Activated CD8-positive, alpha-beta T cell treated with anti-CD3 and anti-CD28 coated beads, Interleukin-2, amount 10 ng/mL, durations not matched to agents 7 days and 5 days (primary cell): ENCODE measurements at regions of chr14 and their contacts with region 1.

Region 1: GRCh38 chr14:23120541-23121251 is 1.6 kb upstream of the CEBPE start:
- DNase-seq: peak; percentile 90
- ATAC-seq: peak; percentile 82
- H3K4me3 Mint-ChIP-seq: peak overlapping the region; percentile 48
- H3K27ac Mint-ChIP-seq: peak overlapping the region; percentile 88
- H3K4me1 Mint-ChIP-seq: peaks cover 41% of the 10 kb centered on the region
- H3K27me3 Mint-ChIP-seq: no peaks in the 10 kb centered on the region

Region 2: GRCh38 chr14:22973217-22974032 is 147.3 kb before region 1 on chr14:
- CTCF ChIA-PET with region 1: no interaction called
- POLR2A ChIA-PET with region 1: no interaction called
- DNase-seq: peak; percentile 55
- ATAC-seq: no peak
- H3K4me3 Mint-ChIP-seq: no peak overlapping the region
- H3K27ac Mint-ChIP-seq: no peak overlapping the region
- H3K4me1 Mint-ChIP-seq: no peaks in the 10 kb centered on the region
- H3K27me3 Mint-ChIP-seq: peaks cover 7% of the 10 kb centered on the region

Region 3: DNA sequence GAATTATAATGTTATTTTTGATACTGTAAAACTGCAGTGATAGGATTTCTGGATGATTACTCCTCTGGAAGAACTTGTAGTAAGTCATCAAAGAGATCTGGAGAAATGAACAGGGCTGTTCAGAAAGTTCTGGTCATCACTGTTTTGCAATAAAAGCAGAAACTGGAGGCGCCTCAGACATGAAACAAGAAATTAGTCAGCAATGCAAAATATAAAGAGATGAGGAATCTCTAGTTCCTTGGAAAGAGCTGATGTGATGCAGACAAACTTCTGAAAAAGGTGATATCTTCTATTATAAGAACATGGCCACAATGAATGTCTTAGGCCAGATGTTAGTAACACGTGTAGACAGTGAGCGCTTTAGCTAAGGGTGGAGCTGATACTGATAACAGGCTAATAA is 35.2 kb before region 1 on chr14:
- CTCF ChIA-PET with region 1: interaction called, 12 read pairs
- POLR2A ChIA-PET with region 1: no interaction called
- DNase-seq: no peak
- ATAC-seq: no peak
- H3K4me3 Mint-ChIP-seq: no peak overlapping the region
- H3K27ac Mint-ChIP-seq: no peak overlapping the region
- H3K4me1 Mint-ChIP-seq: no peaks in the 10 kb centered on the region
- H3K27me3 Mint-ChIP-seq: no peaks in the 10 kb centered on the region

Region 4: DNA sequence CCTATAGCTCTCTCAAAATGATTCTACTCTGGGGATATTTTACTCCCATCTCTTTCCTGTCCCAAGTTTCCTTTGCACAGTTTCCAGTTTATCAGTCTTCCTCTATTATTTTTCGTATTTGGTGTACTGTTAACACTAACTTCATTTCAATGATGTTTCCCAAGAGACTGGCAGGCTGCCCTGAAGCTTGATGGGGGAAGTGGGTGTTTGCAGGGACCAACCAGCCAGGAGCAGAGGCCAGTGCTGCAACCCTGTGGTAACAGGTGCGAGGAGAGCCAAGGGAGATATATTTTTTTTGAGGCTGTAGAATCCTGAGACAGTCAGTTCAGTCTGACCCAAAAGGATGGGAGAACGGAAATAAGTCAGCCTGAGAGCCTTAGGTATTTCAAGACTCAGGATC is 10.2 kb after region 1 on chr14:
- CTCF ChIA-PET with region 1: interaction called, 41 read pairs
- POLR2A ChIA-PET with region 1: no interaction called
- DNase-seq: no peak
- ATAC-seq: no peak
- H3K4me3 Mint-ChIP-seq: no peak overlapping the region
- H3K27ac Mint-ChIP-seq: no peak overlapping the region
- H3K4me1 Mint-ChIP-seq: peaks cover 7% of the 10 kb centered on the region
- H3K27me3 Mint-ChIP-seq: no peaks in the 10 kb centered on the region

Region 5: DNA sequence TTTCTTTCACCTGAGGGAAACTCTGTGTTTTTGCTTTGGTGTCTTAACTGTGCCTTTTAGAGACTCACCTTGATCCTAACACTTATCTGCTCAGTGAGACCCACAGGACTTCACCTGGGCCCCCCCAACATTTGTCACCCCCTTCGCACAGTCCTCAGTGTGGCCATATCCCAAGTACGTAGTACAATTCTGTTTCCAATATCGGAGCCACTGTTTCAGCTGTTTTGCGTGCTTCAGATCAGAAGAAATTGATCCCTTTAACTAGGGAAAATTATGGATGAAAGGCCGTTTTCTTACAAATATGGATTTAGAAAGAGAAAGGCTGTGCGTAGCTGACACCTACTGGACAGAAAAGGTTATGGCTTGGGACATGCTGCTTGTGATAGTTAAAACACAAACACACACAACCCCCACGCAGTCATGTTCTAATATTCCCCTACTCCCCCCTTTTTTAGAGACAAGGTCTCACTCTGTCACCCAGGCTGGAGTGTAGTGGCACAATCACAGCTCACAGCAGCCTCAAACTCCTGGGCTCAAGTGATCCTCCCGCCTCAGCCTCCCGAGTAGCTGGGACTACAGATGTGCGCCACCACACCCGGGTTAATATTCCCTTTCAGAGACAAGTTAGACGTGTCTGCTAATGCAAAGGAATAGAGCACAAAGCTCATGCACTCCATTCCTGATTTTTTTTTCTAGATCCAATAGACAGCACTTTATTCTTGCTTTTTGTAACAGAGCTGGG is 66.4 kb after region 1 on chr14:
- CTCF ChIA-PET with region 1: interaction called, 378 read pairs
- POLR2A ChIA-PET with region 1: interaction called, 6 read pairs
- DNase-seq: peak; percentile 47
- ATAC-seq: no peak
- H3K4me3 Mint-ChIP-seq: no peak overlapping the region
- H3K27ac Mint-ChIP-seq: no peak overlapping the region
- H3K4me1 Mint-ChIP-seq: no peaks in the 10 kb centered on the region
- H3K27me3 Mint-ChIP-seq: peaks cover 12% of the 10 kb centered on the region

Region 6: GRCh38 chr14:23294734-23295561 is 174.3 kb after region 1 on chr14:
- CTCF ChIA-PET with region 1: interaction called, 42 read pairs
- POLR2A ChIA-PET with region 1: interaction called, 3 read pairs
- DNase-seq: peak; percentile 65
- ATAC-seq: peak; percentile 84
- H3K4me3 Mint-ChIP-seq: no peak overlapping the region
- H3K27ac Mint-ChIP-seq: peak overlapping the region; percentile 21
- H3K4me1 Mint-ChIP-seq: peaks cover 22% of the 10 kb centered on the region
- H3K27me3 Mint-ChIP-seq: no peaks in the 10 kb centered on the region

Region 7: DNA sequence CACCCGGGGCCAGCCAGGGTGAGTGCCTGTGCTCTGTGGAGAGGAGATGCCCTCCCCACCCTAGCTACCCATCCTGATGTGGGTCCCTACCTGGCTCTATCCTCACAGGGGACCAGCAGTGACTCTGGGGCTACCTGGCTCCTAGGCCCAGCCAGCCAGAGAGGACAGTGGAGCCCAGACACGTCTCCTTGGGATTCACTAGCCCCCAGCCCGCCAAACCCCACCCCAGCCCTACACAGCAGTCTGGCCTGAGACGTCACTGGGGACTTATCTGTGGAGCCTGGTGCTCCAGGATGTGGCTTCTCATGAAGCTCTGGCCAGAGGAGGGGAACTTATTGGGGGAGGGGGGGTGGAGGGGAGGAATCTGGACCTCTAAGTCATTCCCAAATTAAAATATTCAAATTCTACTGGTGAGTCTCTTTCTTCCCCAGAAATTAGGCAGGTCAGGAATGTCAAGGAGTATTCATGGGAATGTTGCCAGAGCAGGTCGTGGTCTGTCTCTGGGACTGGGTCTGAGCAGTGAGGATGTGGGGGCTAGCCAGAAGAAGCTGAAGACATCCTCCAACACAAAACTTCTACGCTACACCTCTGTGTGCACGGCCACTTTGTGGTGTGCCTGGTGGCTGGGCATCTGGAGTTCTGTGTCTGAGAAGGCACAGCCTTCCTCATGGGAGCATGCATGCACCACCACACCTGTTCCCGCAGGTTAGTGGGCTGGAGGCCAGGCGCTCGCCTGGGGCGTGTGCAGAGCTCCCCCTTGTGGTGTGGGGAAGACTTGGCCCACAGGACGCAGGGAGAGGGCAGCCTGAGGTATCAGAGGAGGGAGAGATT is 258.9 kb after region 1 on chr14:
- CTCF ChIA-PET with region 1: interaction called, 27 read pairs
- POLR2A ChIA-PET with region 1: no interaction called
- DNase-seq: peak; percentile 72
- ATAC-seq: peak; percentile 93
- H3K4me3 Mint-ChIP-seq: no peak overlapping the region
- H3K27ac Mint-ChIP-seq: no peak overlapping the region
- H3K4me1 Mint-ChIP-seq: peaks cover 2% of the 10 kb centered on the region
- H3K27me3 Mint-ChIP-seq: peaks cover 6% of the 10 kb centered on the region